ENCODE measurements at regions of chr18 and their contacts with region 1.

Region 1: DNA sequence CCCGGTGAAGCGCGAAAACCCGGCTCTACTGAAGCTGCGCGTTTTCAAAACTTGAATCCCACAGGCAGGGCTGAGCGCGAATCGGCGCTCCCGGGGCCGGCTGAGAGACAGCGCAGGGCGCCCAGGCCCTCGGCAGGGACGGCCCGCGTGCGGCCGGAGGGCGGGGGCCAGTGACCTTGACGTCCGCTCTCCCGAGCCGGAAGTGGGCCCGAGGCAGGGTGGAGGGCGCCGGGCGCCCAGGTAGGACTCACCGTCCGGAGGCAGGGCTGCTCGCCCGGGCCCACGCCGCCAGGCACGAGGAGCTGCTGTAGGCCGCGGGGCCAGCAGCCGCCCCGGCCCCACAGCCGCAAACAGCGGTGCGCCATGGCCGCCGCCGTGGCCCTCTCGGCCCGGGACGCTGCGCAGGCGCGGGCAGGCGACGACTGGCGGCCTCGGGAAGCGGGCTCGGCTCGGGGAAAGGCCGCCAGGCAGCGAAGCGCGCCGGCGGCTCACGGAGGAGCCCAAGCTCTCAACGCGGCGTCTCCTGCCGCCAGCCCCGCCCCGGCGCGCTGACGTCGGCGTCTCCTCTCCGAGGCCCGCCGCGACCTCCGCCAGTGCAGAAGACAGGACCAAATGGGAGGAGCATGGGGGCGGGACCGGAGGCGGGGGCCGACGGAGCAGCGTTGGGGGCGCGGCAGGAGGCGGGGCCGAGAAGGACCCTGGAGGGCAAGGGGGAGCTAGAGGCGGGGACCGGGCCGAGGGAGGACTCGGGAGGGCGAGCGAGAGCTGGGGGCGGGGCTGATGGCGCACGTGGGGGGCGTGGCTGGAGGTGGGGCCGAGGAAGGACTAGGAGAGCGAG is at the start of gene AFG3L2:
- DNase-seq: peak; percentile 100
- ATAC-seq: peak; percentile 88 to 95 (median 92)
- H3K4me3 ChIP-seq: peak within 1 kb of the TSS; percentile 58 to 95 (median 84)
- H3K27ac ChIP-seq: peak within 1 kb of the TSS; percentile 93 to 100 (median 99)
- H3K4me1 ChIP-seq: peaks cover 0 to 50% (median 37%) of the 10 kb centered on the region in 12 donors
- H3K27me3 ChIP-seq: no peaks in the 10 kb centered on the region
- CTCF ChIP-seq: no peak
- POLR2A ChIP-seq: peak; percentile 82 to 98
- total RNA-seq, gene AFG3L2: 107 to 174 (median 142) TPM

Region 2: DNA sequence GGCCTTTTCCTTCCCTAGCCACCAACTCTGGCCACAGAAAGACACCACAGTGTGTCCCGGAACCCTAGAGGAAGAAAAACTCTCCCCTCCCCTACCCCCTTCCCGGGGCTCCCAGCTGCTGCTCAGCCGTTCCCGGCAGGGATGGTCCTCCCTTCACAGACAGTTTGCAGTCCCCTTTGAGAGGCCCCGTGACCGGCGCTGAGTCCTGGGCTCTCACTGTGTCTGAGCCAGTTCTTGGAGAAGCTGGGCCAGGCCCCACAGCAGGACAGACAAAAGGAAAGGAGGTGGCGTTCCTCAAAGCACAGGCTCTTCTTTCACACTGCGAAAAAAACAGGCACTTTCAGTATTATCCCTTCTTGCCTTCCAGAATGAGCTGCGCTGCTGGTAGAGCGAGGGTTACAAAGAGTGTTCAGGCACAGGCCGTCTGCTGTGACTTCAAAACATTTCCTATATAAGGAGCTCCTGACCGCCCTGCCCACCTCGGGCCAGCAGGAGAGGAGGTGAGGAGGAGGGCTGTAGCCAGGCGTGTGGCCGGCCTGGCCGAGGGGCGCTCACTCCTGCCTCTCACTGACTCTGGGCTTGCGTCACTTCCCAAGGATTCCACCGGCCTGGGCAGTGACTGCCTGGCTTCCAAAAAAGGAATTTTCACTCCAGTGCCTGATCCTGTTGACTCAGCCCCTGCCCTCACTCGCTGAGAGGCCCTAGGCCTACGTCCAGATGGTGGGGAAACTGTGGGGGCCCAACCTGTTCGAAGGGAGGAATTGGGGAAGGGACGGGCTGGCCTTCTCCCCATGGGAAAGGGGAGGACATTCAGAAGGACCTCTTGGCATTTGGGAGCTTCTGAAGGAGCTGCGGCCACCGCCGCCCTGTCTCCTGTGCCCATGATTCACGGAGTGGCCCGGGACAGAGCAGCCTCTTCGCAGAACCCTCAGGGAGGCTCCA is 97.9 kb before region 1 on chr18:
- intact Hi-C with region 1: loop called in 3 of 10 experiments (anchors 1 to 10 kb)
- DNase-seq: peak; percentile 88 to 95 (median 90)
- ATAC-seq: peak; percentile 93 to 96 (median 95)
- H3K4me3 ChIP-seq: peak overlapping the region; percentile 3 to 61 (median 48)
- H3K27ac ChIP-seq: peak overlapping the region; percentile 87 to 100 (median 96)
- H3K4me1 ChIP-seq: peaks cover 0 to 34% (median 22%) of the 10 kb centered on the region in 12 donors
- H3K27me3 ChIP-seq: no peaks in the 10 kb centered on the region
- CTCF ChIP-seq: peak in 3 of 12 donors; percentile 12 to 30 (median 15)
- POLR2A ChIP-seq: peak; percentile 71 to 89

Region 3: GRCh38 chr18:12308386-12309100 is 68.4 kb before region 1 on chr18:
- intact Hi-C with region 1: loop called in 2 of 10 experiments (anchors 2 to 5 kb)
- DNase-seq: peak; percentile 85 to 93 (median 90)
- ATAC-seq: peak; percentile 73 to 88 (median 88)
- H3K4me3 ChIP-seq: peak overlapping the region; percentile 44 to 98 (median 82)
- H3K27ac ChIP-seq: peak overlapping the region; percentile 94 to 100 (median 98)
- H3K4me1 ChIP-seq: peaks cover 0 to 44% (median 27%) of the 10 kb centered on the region in 12 donors
- H3K27me3 ChIP-seq: no peaks in the 10 kb centered on the region
- CTCF ChIP-seq: no peak
- POLR2A ChIP-seq: peak in 1 of 2 donors; percentile 1

Region 4: DNA sequence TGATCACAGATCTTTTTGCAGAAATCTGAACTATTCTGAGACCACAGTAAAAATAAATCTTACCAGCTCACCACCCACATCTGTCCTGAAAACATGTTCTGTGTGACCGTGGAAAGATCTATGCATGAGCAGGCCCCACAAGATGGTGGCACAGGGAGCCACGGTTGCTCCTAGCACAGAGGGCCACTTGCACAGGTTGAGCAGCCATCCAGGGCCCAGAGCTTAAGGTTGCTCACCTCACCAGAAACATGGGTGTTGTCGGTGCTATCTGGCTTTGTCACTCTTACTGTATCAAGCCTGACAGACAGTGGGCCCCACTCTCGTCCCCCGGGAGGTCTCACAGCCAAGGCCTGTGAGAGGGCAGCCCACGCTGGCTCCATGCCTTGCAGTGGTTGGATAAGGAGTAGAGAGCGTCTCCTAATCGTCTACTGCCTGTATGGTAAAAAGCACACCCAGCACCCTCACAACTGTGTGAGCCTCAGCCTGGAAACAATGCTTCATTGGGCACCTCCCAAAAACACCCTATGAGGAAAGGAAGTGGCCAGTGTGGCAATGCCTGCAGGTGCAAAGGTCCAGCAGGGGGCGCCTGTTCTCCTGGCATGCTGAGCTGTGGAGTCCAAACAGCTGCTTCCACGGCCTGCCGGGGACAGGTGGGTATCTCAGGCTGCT is 49.3 kb before region 1 on chr18:
- intact Hi-C with region 1: loop called in 5 of 10 experiments (anchors 5 to 10 kb)
- DNase-seq: peak; percentile 77 to 91 (median 86)
- ATAC-seq: peak; percentile 61 to 84 (median 79)
- H3K4me3 ChIP-seq: no peak overlapping the region
- H3K27ac ChIP-seq: peak overlapping the region; percentile 15 to 66 (median 48)
- H3K4me1 ChIP-seq: peaks cover 0 to 34% (median 21%) of the 10 kb centered on the region in 12 donors
- H3K27me3 ChIP-seq: no peaks in the 10 kb centered on the region
- CTCF ChIP-seq: peak; percentile 62 to 90 (median 78)
- POLR2A ChIP-seq: no peak

Region 5: DNA sequence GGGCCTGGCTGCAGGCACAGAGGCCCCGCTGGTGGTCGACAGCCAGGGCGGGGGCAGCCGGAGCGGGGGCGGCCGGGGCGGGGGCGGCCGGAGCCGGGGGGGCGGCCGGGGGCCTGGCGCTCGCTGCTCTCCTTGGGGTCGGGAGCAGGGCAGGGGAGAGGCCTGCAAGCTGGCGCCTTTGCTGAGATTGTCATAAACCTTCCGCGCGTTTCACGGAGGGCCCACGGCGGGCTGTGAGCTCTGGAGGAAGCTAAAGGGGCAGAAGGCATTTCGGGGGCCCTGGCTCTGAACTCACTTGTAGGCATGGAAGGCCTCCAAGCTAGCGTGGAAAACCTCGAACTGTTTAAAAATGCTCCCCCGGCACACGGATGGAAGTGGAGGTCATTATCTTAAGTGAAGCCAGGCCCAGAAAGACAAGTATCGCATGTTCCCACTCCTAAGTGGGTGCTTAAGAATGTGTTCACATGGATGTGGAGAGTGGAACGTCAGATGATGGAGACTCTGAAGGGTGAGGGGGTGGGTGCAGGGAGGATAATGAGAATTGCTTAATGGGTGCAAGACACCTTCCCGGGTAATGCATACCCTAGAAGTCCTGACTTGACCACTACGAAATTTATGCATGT is 31.4 kb after region 1 on chr18:
- intact Hi-C with region 1: loop called in 2 of 10 experiments (anchors 1 to 2 kb)
- DNase-seq: peak in 2 of 5 donors; percentile 29 to 64
- ATAC-seq: no peak
- H3K4me3 ChIP-seq: peak overlapping the region; percentile 31 to 84 (median 64)
- H3K27ac ChIP-seq: peak overlapping the region in 11 of 12 donors; percentile 74 to 90 (median 85)
- H3K4me1 ChIP-seq: peaks cover 0 to 26% (median 8%) of the 10 kb centered on the region in 12 donors
- H3K27me3 ChIP-seq: peaks cover 0 to 12% (median 0%) of the 10 kb centered on the region in 9 donors
- CTCF ChIP-seq: no peak
- POLR2A ChIP-seq: no peak

Region 6: GRCh38 chr18:12883684-12884405 is 506.9 kb after region 1 on chr18 and contains the start of gene PTPN2:
- intact Hi-C with region 1: loop called in 1 of 10 experiments (anchors 10 kb)
- DNase-seq: peak; percentile 93 to 96 (median 96)
- ATAC-seq: peak; percentile 93 to 97 (median 95)
- H3K4me3 ChIP-seq: peak within 1 kb of the TSS; percentile 60 to 97 (median 78)
- H3K27ac ChIP-seq: peak within 1 kb of the TSS; percentile 99 to 100 (median 100)
- H3K4me1 ChIP-seq: peaks cover 0 to 59% (median 13%) of the 10 kb centered on the region in 12 donors
- H3K27me3 ChIP-seq: no peaks in the 10 kb centered on the region
- CTCF ChIP-seq: no peak
- POLR2A ChIP-seq: peak in 1 of 2 donors; percentile 91
- total RNA-seq, gene PTPN2: 7.5 to 33.1 (median 10.4) TPM

Measured in heart left ventricle (tissue), 16 donors.